B cell (primary cell): ENCODE measurements at regions of chr17 and their contacts with region 1.

Region 1: GRCh38 chr17:82418001-82418986 is at the starts of genes HEXD and OGFOD3:
- DNase-seq: peak; percentile 96
- ATAC-seq: peak; percentile 85
- H3K4me3 ChIP-seq: peak within 1 kb of the TSS; percentile 55 to 90 (median 73)
- H3K4me3 Mint-ChIP-seq: peak within 1 kb of the TSS; percentile 89
- H3K27ac ChIP-seq: peak within 1 kb of the TSS in 1 of 2 donors; percentile 74
- H3K27ac Mint-ChIP-seq: peak within 1 kb of the TSS; percentile 87
- H3K4me1 ChIP-seq: peaks cover 18 to 27% of the 10 kb centered on the region in 2 donors
- H3K4me1 Mint-ChIP-seq: peaks cover 23% of the 10 kb centered on the region
- H3K27me3 ChIP-seq: no peaks in the 10 kb centered on the region
- H3K27me3 Mint-ChIP-seq: no peaks in the 10 kb centered on the region
- CTCF ChIP-seq: no peak
- total RNA-seq, gene HEXD: 128 TPM in 2 replicates
- total RNA-seq, gene OGFOD3: 30.5 and 35.0 TPM in 2 replicates

Region 2: DNA sequence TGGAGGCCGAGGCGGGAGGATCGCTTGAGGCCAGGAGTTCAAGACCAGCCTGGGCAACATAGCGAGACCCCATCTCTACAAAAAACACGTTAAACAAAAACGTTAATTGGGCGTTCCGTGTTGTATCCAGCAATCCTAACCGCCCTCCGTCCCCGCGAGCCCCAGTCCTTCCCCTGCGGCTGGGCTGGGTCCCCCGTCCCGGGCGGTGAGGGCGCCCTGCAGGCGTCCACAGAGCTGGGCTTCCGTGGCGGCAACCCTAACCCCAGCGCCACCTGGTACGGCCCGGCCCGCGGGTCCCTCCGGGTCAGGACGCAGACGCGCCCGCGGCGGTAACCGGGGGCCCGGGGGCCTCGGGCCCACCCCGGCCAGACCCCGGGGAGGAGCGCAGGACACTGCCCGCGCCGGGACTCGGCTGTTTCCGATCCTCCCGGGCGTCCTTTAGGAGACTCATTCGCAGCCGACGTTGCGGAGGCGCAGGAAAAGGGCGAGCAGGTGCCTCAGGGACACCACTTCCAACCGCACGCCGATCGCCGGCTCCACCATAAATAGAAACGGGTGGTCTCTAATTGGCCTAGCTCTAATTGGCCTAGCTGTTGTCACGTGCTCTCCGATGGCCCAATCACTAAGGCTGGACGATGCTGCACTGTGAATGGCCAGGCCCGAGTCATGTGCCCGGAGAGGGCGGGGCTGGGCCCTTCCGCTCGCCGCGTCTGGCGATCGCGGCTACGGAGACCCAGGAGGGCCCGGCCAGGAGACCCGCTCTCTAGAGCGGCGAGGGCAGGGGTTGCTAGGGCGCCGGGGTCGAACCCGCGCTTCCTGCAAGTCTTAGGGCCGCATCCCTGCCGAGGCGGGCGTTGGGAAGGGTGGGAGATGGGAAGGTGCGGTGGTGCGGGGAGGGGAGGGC is 125.8 kb before region 1 on chr17:
- CTCF ChIA-PET with region 1: no interaction called
- POLR2A ChIA-PET with region 1: no interaction called
- intact Hi-C with region 1: loop called (anchors 10 kb)
- DNase-seq: peak; percentile 96
- ATAC-seq: peak; percentile 93
- H3K4me3 ChIP-seq: peak overlapping the region; percentile 50 to 86 (median 72)
- H3K4me3 Mint-ChIP-seq: peak overlapping the region; percentile 93
- H3K27ac ChIP-seq: peak overlapping the region; percentile 92 to 97
- H3K27ac Mint-ChIP-seq: peak overlapping the region; percentile 93
- H3K4me1 ChIP-seq: peaks cover 20 to 31% of the 10 kb centered on the region in 2 donors
- H3K4me1 Mint-ChIP-seq: peaks cover 42% of the 10 kb centered on the region
- H3K27me3 ChIP-seq: no peaks in the 10 kb centered on the region
- H3K27me3 Mint-ChIP-seq: no peaks in the 10 kb centered on the region
- CTCF ChIP-seq: no peak

Region 3: DNA sequence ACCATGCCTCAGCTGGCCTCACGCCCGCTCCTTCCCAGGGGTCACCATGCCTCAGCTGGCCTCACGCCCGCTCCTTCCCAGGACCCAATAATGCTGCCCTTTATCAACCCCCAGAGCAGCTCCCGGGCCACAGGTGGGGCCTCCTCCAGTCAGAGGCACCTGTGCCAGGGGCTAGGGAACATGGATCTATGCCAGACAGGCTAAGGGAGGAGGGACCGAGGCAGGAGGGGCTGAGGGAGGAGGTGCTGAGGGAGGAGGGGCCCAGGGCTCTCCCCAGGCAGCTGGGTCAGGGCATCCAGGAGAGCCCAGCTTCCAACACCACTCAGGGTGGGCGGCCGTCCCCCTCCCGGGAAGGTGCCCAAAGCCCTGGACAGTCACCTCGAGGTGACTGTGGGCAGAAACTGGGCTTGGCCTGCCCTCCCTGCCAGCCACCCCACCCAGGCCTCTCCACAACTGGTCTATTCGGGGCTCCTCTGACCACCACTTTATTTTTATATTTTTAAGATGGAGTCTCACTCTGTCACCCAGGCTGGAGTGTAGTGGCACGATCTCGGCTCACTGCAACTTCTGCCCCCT is 27.3 kb before region 1 on chr17:
- CTCF ChIA-PET with region 1: no interaction called
- POLR2A ChIA-PET with region 1: no interaction called
- intact Hi-C with region 1: no loop called
- DNase-seq: no peak
- ATAC-seq: no peak
- H3K4me3 ChIP-seq: no peak overlapping the region
- H3K4me3 Mint-ChIP-seq: no peak overlapping the region
- H3K27ac ChIP-seq: no peak overlapping the region
- H3K27ac Mint-ChIP-seq: no peak overlapping the region
- H3K4me1 ChIP-seq: no peaks in the 10 kb centered on the region
- H3K4me1 Mint-ChIP-seq: peaks cover 2% of the 10 kb centered on the region
- H3K27me3 ChIP-seq: peaks cover 0 to 12% (median 0%) of the 10 kb centered on the region in 4 experiments
- H3K27me3 Mint-ChIP-seq: no peaks in the 10 kb centered on the region
- CTCF ChIP-seq: no peak

Region 4: GRCh38 chr17:82450170-82451106 is 32.1 kb after region 1 on chr17 and contains the start of gene CYBC1:
- CTCF ChIA-PET with region 1: interaction called, 11 read pairs
- POLR2A ChIA-PET with region 1: interaction called, 6 read pairs
- intact Hi-C with region 1: loop called (anchors 1 kb)
- DNase-seq: peak; percentile 97
- ATAC-seq: peak; percentile 55
- H3K4me3 ChIP-seq: peak within 1 kb of the TSS; percentile 81 to 99 (median 93)
- H3K4me3 Mint-ChIP-seq: peak within 1 kb of the TSS; percentile 88
- H3K27ac ChIP-seq: peak within 1 kb of the TSS; percentile 95 to 99
- H3K27ac Mint-ChIP-seq: peak within 1 kb of the TSS; percentile 96
- H3K4me1 ChIP-seq: peaks cover 17 to 47% of the 10 kb centered on the region in 2 donors
- H3K4me1 Mint-ChIP-seq: peaks cover 40% of the 10 kb centered on the region
- H3K27me3 ChIP-seq: no peaks in the 10 kb centered on the region
- H3K27me3 Mint-ChIP-seq: no peaks in the 10 kb centered on the region
- CTCF ChIP-seq: no peak
- total RNA-seq, gene CYBC1: 569 and 578 TPM in 2 replicates

Region 5: DNA sequence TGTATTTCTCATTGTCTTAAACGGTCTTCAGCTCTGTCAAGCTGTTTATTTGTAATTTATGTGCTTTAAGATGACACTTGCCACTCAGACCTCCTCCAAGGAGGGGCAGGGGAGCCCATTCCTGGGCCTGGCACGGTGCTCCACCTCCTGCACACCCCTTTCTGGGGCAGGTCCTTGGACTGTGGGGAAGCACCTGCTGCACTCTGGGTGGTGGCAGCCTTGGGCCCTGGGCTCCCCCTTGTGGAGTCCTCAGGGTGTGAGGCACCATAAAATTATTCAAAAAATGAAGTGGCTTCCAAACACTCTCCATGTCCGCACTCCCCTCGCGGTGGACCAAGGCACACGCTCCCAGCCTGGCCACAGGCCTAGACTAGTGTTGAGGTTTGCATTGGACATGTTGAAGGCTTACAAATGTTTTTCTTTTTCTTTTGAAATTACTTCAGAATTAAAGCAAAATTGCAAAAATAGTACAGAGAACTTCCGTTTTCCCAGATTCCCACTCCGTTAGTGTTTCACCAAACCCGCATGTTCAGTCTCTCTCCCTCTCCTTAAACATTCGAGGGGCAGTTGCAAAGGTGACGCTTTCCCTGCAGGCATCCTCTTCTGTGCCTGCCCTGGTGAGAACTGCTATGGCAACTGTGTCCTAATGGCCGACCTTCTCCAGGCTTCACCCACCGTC is 133.6 kb after region 1 on chr17:
- CTCF ChIA-PET with region 1: interaction called, 6 read pairs
- POLR2A ChIA-PET with region 1: no interaction called
- intact Hi-C with region 1: loop called (anchors 5 kb)
- DNase-seq: peak; percentile 84
- ATAC-seq: peak; percentile 100
- H3K4me3 ChIP-seq: no peak overlapping the region
- H3K4me3 Mint-ChIP-seq: no peak overlapping the region
- H3K27ac ChIP-seq: no peak overlapping the region
- H3K27ac Mint-ChIP-seq: no peak overlapping the region
- H3K4me1 ChIP-seq: peaks cover 15 to 28% of the 10 kb centered on the region in 2 donors
- H3K4me1 Mint-ChIP-seq: peaks cover 40% of the 10 kb centered on the region
- H3K27me3 ChIP-seq: no peaks in the 10 kb centered on the region
- H3K27me3 Mint-ChIP-seq: no peaks in the 10 kb centered on the region
- CTCF ChIP-seq: peak; percentile 94

Region 6: DNA sequence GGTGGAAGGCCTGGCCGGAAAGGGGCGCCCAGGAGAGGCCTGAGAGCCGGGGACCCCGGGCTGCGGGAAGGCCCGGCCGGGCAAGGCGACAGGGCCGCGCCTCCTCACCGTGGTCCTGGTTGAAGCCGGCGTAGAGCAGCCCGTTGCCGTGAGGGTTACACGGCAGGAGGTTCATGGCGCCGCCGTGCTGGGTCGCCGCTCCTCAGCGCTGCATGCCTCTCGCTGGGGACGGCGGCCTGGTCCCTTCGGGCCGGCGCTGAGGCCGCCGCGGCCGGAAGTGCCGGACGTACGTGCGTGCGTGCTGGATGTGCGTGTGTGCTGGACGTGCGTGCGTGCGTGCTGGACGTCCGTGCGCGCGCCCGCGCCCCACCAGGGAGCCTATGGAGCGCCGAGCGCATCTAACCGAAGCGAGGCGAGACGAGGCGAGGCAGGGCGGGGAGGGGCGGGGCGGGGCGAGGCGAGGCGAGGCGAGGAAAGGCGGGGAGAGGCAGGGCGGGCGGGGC is 229.9 kb after region 1 on chr17 and contains the start of gene WDR45B:
- CTCF ChIA-PET with region 1: no interaction called
- POLR2A ChIA-PET with region 1: no interaction called
- intact Hi-C with region 1: loop called (anchors 2 kb)
- DNase-seq: peak; percentile 96
- ATAC-seq: peak; percentile 89
- H3K4me3 ChIP-seq: peak within 1 kb of the TSS; percentile 41 to 85 (median 75)
- H3K4me3 Mint-ChIP-seq: peak within 1 kb of the TSS; percentile 92
- H3K27ac ChIP-seq: peak within 1 kb of the TSS; percentile 83 to 89
- H3K27ac Mint-ChIP-seq: peak within 1 kb of the TSS; percentile 97
- H3K4me1 ChIP-seq: peaks cover 15 to 20% of the 10 kb centered on the region in 2 donors
- H3K4me1 Mint-ChIP-seq: peaks cover 23% of the 10 kb centered on the region
- H3K27me3 ChIP-seq: no peaks in the 10 kb centered on the region
- H3K27me3 Mint-ChIP-seq: no peaks in the 10 kb centered on the region
- CTCF ChIP-seq: no peak
- total RNA-seq, gene WDR45B: 63.3 and 72.7 TPM in 2 replicates